Caco-2 (cell line): ENCODE measurements at regions of chr7 and their contacts with region 1.

Region 1: GRCh38 chr7:16564909-16565426 is 38.3 kb downstream of the LRRC72 start:
- DNase-seq: peak in 1 of 2 experiments; percentile 64
- H3K4me3 ChIP-seq: no peak overlapping the region
- H3K4me3 Mint-ChIP-seq: no peak overlapping the region
- H3K27ac Mint-ChIP-seq: no peak overlapping the region
- H3K4me1 ChIP-seq: peaks cover 7% of the 10 kb centered on the region
- H3K4me1 Mint-ChIP-seq: peaks cover 22% of the 10 kb centered on the region
- H3K27me3 ChIP-seq: no peaks in the 10 kb centered on the region
- H3K27me3 Mint-ChIP-seq: no peaks in the 10 kb centered on the region
- CTCF ChIP-seq: peak; percentile 64 to 73

Region 2: DNA sequence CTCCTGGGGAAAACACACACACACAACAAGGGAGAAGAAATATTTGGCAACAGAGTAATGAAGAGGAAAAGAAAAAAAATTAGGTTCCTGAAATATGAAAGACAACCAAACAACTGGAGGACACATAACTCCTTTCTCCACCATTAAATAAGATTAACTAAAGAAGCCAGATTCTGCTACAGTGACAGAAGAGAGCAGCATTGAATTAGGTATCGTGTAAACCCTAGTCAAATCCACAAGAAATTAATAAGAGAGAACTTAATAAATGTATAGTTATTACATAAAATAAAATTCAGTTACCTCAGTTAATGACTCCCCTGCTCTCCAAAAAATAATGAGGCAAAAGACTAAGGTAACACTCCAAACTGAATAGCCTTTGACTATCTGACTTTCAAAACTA is 450.3 kb before region 1 on chr7:
- CTCF ChIA-PET with region 1: no interaction called
- POLR2A ChIA-PET with region 1: no interaction called
- intact Hi-C with region 1: loop called (anchors 1 kb)
- DNase-seq: peak in 1 of 2 experiments; percentile 19
- H3K4me3 ChIP-seq: no peak overlapping the region
- H3K4me3 Mint-ChIP-seq: no peak overlapping the region
- H3K27ac Mint-ChIP-seq: peak overlapping the region; percentile 13
- H3K4me1 ChIP-seq: no peaks in the 10 kb centered on the region
- H3K4me1 Mint-ChIP-seq: peaks cover 8% of the 10 kb centered on the region
- H3K27me3 ChIP-seq: no peaks in the 10 kb centered on the region
- H3K27me3 Mint-ChIP-seq: no peaks in the 10 kb centered on the region
- CTCF ChIP-seq: peak; percentile 33 to 39

Region 3: DNA sequence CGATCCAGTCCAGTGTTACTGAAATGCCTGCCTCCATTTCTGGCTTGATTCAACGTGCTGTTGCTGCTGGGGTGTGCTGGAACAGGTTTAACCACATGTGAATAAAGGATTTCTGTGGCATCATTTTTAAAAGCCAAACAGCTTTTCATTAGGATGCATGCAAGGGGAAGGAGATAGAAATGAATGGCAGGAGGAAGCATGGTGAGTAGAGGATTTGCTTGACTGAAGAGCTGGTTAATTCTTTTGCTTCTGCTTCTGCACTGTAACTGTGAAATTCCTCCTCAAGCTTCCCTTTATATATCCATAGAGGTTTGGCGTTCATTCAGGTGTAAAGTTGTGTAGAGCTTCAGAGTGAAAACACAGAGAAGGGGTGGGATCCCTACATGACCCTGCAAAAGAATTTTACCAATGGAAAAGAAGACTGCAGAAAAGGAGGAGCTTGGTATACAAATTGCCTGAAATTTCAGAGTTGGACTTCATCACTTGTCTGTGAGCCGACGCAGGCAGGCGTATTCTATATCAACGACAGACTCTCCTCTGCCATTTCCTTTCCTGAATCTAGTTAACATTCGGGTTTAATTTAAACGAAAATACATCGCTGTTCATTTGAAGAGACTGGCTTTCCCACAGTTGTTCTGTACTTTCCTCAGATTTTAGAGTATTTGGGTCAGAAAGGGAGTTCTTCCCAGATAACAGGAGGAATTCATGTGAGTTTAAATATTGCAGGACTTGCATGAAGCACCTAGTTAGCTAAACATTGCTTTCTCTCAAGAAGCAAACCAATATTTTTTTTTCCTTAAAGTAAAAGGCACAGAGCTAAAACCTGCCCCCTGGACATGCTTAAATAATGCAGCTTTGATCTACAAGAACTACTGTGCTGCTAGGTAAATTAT is 99.3 kb before region 1 on chr7 and contains the start of gene SOSTDC1:
- CTCF ChIA-PET with region 1: interaction called, 15 read pairs
- POLR2A ChIA-PET with region 1: interaction called, 3 read pairs
- intact Hi-C with region 1: loop called (anchors 1 kb)
- DNase-seq: peak in 1 of 2 experiments; percentile 54
- H3K4me3 ChIP-seq: peak within 1 kb of the TSS; percentile 29
- H3K4me3 Mint-ChIP-seq: peak within 1 kb of the TSS; percentile 77
- H3K27ac Mint-ChIP-seq: peak within 1 kb of the TSS; percentile 58
- H3K4me1 ChIP-seq: peaks cover 16% of the 10 kb centered on the region
- H3K4me1 Mint-ChIP-seq: peaks cover 17% of the 10 kb centered on the region
- H3K27me3 ChIP-seq: no peaks in the 10 kb centered on the region
- H3K27me3 Mint-ChIP-seq: no peaks in the 10 kb centered on the region
- CTCF ChIP-seq: no peak
- total RNA-seq, gene SOSTDC1: 8.1 and 8.4 TPM in 2 replicates

Region 4: DNA sequence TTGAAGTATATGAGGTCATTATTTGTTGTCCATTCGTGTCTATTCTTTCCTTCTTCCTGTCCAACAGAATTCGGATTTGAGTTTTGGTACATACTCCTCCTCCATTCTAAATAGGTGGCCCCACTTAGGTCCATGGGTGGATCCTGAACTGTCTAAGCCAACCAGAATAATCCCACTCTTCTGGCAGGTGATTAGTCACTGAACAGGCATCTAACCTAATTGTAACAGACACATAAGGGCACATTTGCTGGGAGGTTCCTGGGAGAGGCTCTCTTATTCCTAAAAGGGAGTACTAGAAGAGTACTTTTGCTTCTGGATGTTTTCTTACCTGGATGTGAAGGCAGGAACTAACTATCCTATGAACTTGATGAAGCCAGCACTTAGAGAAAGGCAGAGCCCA is 21.5 kb before region 1 on chr7:
- CTCF ChIA-PET with region 1: interaction called, 26 read pairs
- POLR2A ChIA-PET with region 1: interaction called, 6 read pairs
- intact Hi-C with region 1: loop called (anchors 1 kb)
- DNase-seq: no peak
- H3K4me3 ChIP-seq: no peak overlapping the region
- H3K4me3 Mint-ChIP-seq: no peak overlapping the region
- H3K27ac Mint-ChIP-seq: peak overlapping the region; percentile 85
- H3K4me1 ChIP-seq: peaks cover 38% of the 10 kb centered on the region
- H3K4me1 Mint-ChIP-seq: peaks cover 31% of the 10 kb centered on the region
- H3K27me3 ChIP-seq: no peaks in the 10 kb centered on the region
- H3K27me3 Mint-ChIP-seq: no peaks in the 10 kb centered on the region
- CTCF ChIP-seq: no peak